Activated naive CD4-positive, alpha-beta T cell treated with anti-CD3 and anti-CD28 coated beads for 36 hours (primary cell): ENCODE measurements at regions of chr4 and their contacts with region 1.

Region 1: DNA sequence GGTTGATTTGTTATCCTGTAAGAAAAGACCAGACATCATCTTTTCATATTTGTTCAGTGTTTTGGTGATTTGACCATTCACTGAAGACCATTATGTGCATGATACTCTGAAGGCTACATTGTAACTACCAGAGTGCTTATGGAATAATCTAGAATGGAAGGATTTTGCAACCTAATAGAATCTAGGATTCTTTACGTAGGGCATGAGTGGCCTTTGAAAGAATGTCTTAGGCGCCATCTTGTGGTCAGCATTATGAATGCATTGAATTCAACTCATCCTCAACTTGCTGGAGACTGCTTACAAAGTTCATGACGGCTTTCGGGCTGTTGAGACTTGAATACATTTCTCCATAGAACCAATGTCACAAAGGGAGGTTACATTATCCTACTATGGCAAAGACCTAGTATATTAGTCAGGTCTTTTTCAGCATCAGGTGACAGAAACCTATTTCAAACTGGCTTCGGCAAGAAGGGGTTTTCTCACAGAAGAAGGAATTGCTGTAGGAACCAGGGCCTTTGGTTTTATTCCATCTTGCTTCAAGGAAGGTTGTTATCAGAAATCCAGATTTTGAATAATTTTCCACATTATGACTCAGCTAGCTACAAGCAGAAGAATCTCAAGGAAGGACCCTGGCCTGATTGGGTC is 104.1 kb downstream of the GPAT3 start:
- DNase-seq: peak; percentile 74
- H3K4me3 Mint-ChIP-seq: no peak overlapping the region
- H3K27ac Mint-ChIP-seq: no peak overlapping the region
- H3K4me1 Mint-ChIP-seq: peaks cover 3% of the 10 kb centered on the region
- H3K27me3 Mint-ChIP-seq: no peaks in the 10 kb centered on the region

Region 2: GRCh38 chr4:83074086-83074704 is 565.8 kb before region 1 on chr4:
- CTCF ChIA-PET with region 1: no interaction called
- intact Hi-C with region 1: loop called (anchors 5 kb)
- DNase-seq: peak; percentile 76
- H3K4me3 Mint-ChIP-seq: no peak overlapping the region
- H3K27ac Mint-ChIP-seq: no peak overlapping the region
- H3K4me1 Mint-ChIP-seq: peaks cover 13% of the 10 kb centered on the region
- H3K27me3 Mint-ChIP-seq: no peaks in the 10 kb centered on the region

Region 3: GRCh38 chr4:83408908-83409307 is 231.1 kb before region 1 on chr4:
- CTCF ChIA-PET with region 1: no interaction called
- intact Hi-C with region 1: loop called (anchors 10 kb)
- DNase-seq: no peak
- H3K4me3 Mint-ChIP-seq: no peak overlapping the region
- H3K27ac Mint-ChIP-seq: no peak overlapping the region
- H3K4me1 Mint-ChIP-seq: no peaks in the 10 kb centered on the region
- H3K27me3 Mint-ChIP-seq: no peaks in the 10 kb centered on the region

Region 4: GRCh38 chr4:83503974-83504373 is 136.0 kb before region 1 on chr4:
- CTCF ChIA-PET with region 1: interaction called, 54 read pairs
- intact Hi-C with region 1: loop called (anchors 1 kb)
- DNase-seq: peak; percentile 49
- H3K4me3 Mint-ChIP-seq: no peak overlapping the region
- H3K27ac Mint-ChIP-seq: peak overlapping the region; percentile 64
- H3K4me1 Mint-ChIP-seq: peaks cover 14% of the 10 kb centered on the region
- H3K27me3 Mint-ChIP-seq: no peaks in the 10 kb centered on the region

Region 5: DNA sequence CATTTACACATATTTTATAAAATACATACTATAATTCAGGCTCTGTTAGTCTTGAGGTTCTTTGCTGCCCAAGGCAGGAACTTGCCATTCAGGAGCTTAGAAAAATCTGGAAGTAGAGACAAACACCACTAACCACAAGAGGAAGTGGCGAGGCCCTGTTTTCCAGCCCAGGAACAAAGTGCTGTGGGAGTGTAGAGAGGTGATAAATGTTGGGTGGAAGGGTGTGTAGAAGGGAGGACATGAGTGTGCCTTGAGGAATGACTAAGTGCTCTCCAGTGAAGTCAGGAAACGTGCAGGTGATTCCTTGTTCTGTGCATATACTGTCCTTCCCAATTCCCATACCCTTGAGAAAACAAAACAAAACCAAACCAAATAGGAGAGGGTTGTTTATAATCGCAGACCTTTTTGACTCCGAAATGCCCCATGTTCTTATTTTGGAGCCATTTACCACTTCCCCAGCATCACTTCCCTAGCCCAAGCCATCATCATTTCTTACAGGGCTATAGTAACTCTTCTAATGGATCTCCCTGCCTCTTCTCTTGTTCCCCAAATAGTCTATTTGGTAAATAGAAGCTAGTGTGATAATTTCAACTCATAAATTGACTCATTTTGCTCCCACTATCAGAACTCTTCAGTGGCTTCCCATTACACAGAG is 20.9 kb before region 1 on chr4:
- CTCF ChIA-PET with region 1: interaction called, 10 read pairs
- intact Hi-C with region 1: no loop called
- DNase-seq: no peak
- H3K4me3 Mint-ChIP-seq: no peak overlapping the region
- H3K27ac Mint-ChIP-seq: no peak overlapping the region
- H3K4me1 Mint-ChIP-seq: no peaks in the 10 kb centered on the region
- H3K27me3 Mint-ChIP-seq: peaks cover 10% of the 10 kb centered on the region

Region 6: GRCh38 chr4:84503495-84504437 is 863.8 kb after region 1 on chr4:
- CTCF ChIA-PET with region 1: no interaction called
- intact Hi-C with region 1: loop called (anchors 1 kb)
- DNase-seq: peak; percentile 43
- H3K4me3 Mint-ChIP-seq: no peak overlapping the region
- H3K27ac Mint-ChIP-seq: peak overlapping the region; percentile 63
- H3K4me1 Mint-ChIP-seq: peaks cover 14% of the 10 kb centered on the region
- H3K27me3 Mint-ChIP-seq: peaks cover 76% of the 10 kb centered on the region

Region 7: DNA sequence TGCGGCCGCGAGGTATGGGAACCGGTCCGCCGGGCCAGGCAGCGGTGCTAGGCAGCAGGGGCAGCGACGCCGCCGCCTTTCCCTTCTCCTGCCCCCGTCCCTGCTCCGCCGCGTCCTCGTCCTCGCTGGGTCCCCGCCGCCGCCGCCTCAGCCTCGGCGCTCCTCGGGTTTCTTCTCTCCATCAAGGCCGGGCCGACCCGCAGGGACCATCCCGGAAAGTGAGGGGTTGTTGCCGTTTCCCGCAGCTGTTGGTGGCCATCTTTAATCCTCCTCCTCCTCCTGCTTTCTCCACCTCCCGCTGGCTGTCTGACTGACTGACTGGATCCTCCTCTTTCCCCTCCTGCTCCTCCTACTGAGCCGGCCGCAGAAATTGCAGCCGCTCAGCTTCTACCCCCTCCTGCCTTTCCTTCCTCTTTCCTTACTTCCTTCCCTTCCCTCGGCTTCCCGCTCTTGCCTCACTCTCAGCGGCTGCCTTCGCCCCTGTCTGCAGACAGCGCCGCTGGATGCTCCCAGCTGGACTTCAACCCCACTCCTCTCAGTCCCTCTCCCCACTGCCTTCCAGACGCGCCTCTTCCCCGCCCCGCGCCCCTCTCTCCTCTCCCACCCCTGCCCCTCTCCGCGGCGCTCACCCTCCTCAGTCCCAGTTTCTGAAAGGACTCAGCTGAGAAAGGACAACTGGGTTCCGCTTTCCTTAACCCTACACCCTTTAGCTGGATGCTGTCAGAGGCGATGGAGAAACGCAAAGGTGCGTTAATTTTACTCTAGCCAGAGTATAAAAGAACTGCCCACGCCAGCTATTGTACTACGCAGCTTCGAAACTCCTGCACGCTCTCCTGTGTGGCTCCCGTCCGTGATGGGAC is 1326.6 kb after region 1 on chr4 and contains the start of gene WDFY3:
- CTCF ChIA-PET with region 1: no interaction called
- intact Hi-C with region 1: loop called (anchors 1 kb)
- DNase-seq: peak; percentile 35
- H3K4me3 Mint-ChIP-seq: peak within 1 kb of the TSS; percentile 85
- H3K27ac Mint-ChIP-seq: no peak within 1 kb of the TSS
- H3K4me1 Mint-ChIP-seq: peaks cover 14% of the 10 kb centered on the region
- H3K27me3 Mint-ChIP-seq: peaks cover 38% of the 10 kb centered on the region
- total RNA-seq, gene WDFY3: 1.0 to 1.2 TPM